H1 (cell line): ENCODE measurements at regions of chr1 and their contacts with region 1.

Region 1: DNA sequence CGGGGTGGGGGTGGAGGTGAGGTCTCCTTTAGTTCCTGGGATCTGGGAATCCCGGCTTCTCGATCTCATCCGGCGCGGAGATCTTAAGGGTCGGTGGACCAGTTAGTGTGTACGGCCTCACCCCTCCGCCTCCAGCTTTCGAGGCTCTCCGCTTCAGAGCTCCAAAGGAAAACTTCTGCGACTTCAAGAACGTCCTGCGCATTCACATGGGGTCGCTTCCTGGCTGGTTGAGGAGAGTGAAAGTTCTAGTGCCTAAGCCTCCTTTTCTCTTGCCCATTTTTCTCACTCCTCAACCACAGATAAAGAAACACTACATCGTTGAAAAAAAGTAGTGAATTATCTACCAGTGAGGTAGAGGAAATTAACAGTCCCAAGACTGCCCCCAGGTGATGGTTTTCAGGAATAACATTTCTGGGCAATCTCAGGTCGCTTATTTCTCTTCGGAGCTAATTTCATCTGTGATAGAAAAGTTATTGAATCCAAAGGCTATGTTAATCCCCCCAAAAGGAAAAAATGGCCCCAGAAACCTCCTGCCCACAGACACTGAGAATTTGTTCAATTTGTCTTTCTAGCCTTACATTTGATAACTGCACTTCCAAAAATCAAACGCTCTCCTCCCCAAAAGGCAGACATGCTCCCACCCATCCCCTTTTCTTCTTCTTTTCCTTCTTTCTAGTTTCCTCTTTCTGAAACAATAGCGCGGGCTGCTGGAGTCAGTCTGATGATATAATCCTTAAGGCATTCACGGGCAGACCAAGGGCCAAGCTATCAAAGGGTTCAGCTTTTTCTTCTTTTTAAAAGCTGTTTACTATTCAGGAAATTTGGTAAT is 20.6 kb upstream of the TBX15 start:
- DNase-seq: peak in 1 of 2 experiments; percentile 63
- H3K4me3 ChIP-seq: peak overlapping the region; percentile 10 to 57 (median 25); a peak in 6 of 8 replicates
- H3K27ac ChIP-seq: no peak overlapping the region
- H3K4me1 ChIP-seq: peaks cover 0 to 16% (median 9%) of the 10 kb centered on the region in 4 experiments; a peak in 6 of 7 replicates
- H3K27me3 ChIP-seq: peaks cover 47 to 61% (median 54%) of the 10 kb centered on the region in 4 experiments
- CTCF ChIP-seq: peak in 2 of 3 experiments; percentile 24 to 67; a peak in 2 of 4 replicates
- EP300 ChIP-seq: no peak
- POLR2A ChIP-seq: no peak
- RAD21 ChIP-seq: peak; percentile 72 to 74

Region 2: GRCh38 chr1:118223426-118223825 is 785.3 kb before region 1 on chr1:
- CTCF ChIA-PET with region 1: interaction called, 12 read pairs
- POLR2A ChIA-PET with region 1: no interaction called
- DNase-seq: peak; percentile 5 to 57
- H3K4me3 ChIP-seq: no peak overlapping the region
- H3K27ac ChIP-seq: no peak overlapping the region
- H3K4me1 ChIP-seq: no peaks in the 10 kb centered on the region
- H3K27me3 ChIP-seq: no peaks in the 10 kb centered on the region
- CTCF ChIP-seq: peak in 2 of 3 experiments; percentile 70 to 73; a peak in 3 of 4 replicates
- EP300 ChIP-seq: no peak
- POLR2A ChIP-seq: no peak
- RAD21 ChIP-seq: peak; percentile 92 to 93

Region 3: GRCh38 chr1:118786454-118787155 is 222.1 kb before region 1 on chr1:
- CTCF ChIA-PET with region 1: no interaction called
- POLR2A ChIA-PET with region 1: no interaction called
- DNase-seq: no peak
- H3K4me3 ChIP-seq: no peak overlapping the region
- H3K27ac ChIP-seq: no peak overlapping the region
- H3K4me1 ChIP-seq: peaks cover 0 to 3% (median 0%) of the 10 kb centered on the region in 4 experiments; a peak in 1 of 7 replicates
- H3K27me3 ChIP-seq: no peaks in the 10 kb centered on the region; a peak in 1 of 7 replicates
- CTCF ChIP-seq: no peak
- EP300 ChIP-seq: no peak
- POLR2A ChIP-seq: no peak
- RAD21 ChIP-seq: no peak

Region 4: GRCh38 chr1:118881751-118882150 is 126.9 kb before region 1 on chr1:
- CTCF ChIA-PET with region 1: no interaction called
- POLR2A ChIA-PET with region 1: no interaction called
- DNase-seq: no peak
- H3K4me3 ChIP-seq: no peak overlapping the region
- H3K27ac ChIP-seq: no peak overlapping the region
- H3K4me1 ChIP-seq: no peaks in the 10 kb centered on the region
- H3K27me3 ChIP-seq: no peaks in the 10 kb centered on the region
- CTCF ChIP-seq: no peak
- EP300 ChIP-seq: no peak
- POLR2A ChIP-seq: no peak
- RAD21 ChIP-seq: no peak

Region 5: GRCh38 chr1:118984086-118984721 is 24.5 kb before region 1 on chr1:
- CTCF ChIA-PET with region 1: interaction called, 24 read pairs
- POLR2A ChIA-PET with region 1: interaction called, 7 read pairs
- DNase-seq: peak; percentile 80 to 81
- H3K4me3 ChIP-seq: peak overlapping the region; percentile 10 to 51 (median 14); a peak in 5 of 8 replicates
- H3K27ac ChIP-seq: no peak overlapping the region
- H3K4me1 ChIP-seq: peaks cover 7 to 27% (median 13%) of the 10 kb centered on the region in 4 experiments
- H3K27me3 ChIP-seq: peaks cover 88 to 100% (median 98%) of the 10 kb centered on the region in 4 experiments
- CTCF ChIP-seq: peak in 1 of 3 experiments; percentile 28; a peak in 1 of 4 replicates
- EP300 ChIP-seq: no peak
- POLR2A ChIP-seq: no peak
- RAD21 ChIP-seq: peak; percentile 45 to 58

Region 6: DNA sequence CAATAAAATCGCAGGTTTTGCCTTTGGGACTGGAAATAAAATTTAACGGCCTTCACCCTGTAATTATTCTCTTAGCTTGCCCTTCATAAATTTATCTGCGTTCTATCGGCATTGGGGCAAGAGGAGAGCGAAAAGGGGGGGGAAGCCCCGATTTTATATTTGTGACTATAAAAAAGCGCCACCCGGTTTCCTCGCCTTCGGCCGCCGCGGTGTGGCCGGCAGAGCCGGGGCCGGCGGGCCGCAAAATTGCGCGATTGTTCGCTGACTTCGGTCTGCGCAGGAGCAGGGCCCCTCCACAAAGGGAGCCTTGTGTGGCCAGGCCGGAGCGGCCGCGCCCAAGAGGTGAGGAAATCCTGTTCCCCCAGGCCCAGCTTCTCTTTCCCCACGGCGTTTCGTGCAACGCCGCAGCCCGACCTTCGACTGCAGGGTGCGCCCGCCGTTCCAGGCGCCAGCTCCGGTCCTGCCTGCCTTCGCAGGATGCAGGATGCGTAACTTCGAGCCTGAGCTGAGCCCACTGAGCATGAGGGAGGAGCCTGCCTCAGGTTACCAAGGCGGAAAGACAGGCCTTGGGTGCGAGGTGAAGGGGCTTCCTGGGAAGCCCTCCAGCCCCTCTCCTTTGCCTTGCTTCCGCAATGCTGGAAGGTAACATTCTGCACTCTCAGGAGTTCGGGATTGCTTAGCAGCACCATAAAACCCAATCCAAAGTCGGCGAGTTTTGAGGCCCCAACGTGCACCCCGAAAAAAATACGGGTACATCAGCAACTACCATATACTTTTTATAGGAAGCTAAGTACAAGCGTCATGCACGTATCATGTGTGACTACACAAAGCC is 15.6 kb before region 1 on chr1:
- CTCF ChIA-PET with region 1: interaction called, 35 read pairs
- POLR2A ChIA-PET with region 1: interaction called, 3 read pairs
- DNase-seq: peak in 1 of 2 experiments; percentile 71
- H3K4me3 ChIP-seq: peak overlapping the region in 3 of 4 experiments; percentile 5 to 51 (median 7); a peak in 3 of 8 replicates
- H3K27ac ChIP-seq: no peak overlapping the region
- H3K4me1 ChIP-seq: peaks cover 13 to 43% (median 20%) of the 10 kb centered on the region in 4 experiments
- H3K27me3 ChIP-seq: peaks cover 91 to 100% (median 100%) of the 10 kb centered on the region in 4 experiments
- CTCF ChIP-seq: no peak
- EP300 ChIP-seq: no peak
- POLR2A ChIP-seq: no peak
- RAD21 ChIP-seq: no peak

Region 7: GRCh38 chr1:119061700-119062099 is 53.0 kb after region 1 on chr1:
- CTCF ChIA-PET with region 1: no interaction called
- POLR2A ChIA-PET with region 1: no interaction called
- DNase-seq: no peak
- H3K4me3 ChIP-seq: no peak overlapping the region
- H3K27ac ChIP-seq: no peak overlapping the region
- H3K4me1 ChIP-seq: no peaks in the 10 kb centered on the region
- H3K27me3 ChIP-seq: no peaks in the 10 kb centered on the region
- CTCF ChIP-seq: no peak
- EP300 ChIP-seq: no peak
- POLR2A ChIP-seq: no peak
- RAD21 ChIP-seq: no peak